Left colon (tissue), 2 donors: ENCODE measurements at regions of chr17 and their contacts with region 1.

Region 1: GRCh38 chr17:62065598-62066468 is 755 bp upstream of the MED13 start:
- DNase-seq: peak; percentile 98 to 99
- ATAC-seq: peak; percentile 96

Region 2: DNA sequence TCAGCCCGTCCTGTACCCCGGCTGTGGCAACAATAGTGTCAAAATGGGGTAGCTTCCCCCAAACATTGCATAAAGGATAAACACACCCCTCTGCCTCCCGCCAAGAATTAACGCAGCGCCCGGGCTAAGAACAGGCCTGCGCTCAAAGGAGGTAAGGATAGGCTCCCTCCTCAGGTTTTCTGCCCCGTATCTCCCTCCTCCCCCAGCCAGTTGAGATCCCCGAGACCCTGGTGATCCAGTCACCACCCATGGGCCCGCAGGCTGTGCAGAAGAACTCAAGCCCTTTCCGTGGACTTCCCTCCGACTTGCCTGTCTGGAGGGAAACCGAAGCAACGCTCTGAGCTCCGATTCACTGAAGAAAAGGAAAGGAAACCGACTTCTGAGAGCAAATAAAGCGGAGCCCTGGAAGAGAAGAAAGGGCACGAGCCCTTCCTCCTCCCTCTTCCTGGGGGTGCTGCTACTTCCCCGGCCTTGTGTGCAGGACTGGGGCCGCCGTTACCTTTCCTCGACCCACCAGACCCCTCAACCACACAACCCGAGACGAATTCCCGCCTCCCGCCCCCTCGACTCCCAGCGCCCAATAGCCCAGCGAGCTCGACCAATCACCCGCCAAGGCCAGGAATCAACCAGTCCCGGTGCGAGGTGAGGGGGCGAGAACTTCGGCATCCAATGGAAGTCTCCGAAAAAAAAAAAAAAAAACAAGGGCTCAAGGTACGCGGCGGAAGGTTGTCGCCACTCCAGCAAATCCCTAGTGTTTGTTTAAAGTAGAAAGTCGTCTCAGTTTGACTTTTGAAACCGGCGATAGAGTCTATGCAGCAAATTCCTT is 202.6 kb before region 1 on chr17 and contains the start of gene BRIP1:
- intact Hi-C with region 1: loop called in 1 of 2 experiments (anchors 10 kb)
- DNase-seq: peak; percentile 91 to 92
- ATAC-seq: peak; percentile 96
- total RNA-seq, gene BRIP1: 1.9 to 3.3 TPM

Region 3: DNA sequence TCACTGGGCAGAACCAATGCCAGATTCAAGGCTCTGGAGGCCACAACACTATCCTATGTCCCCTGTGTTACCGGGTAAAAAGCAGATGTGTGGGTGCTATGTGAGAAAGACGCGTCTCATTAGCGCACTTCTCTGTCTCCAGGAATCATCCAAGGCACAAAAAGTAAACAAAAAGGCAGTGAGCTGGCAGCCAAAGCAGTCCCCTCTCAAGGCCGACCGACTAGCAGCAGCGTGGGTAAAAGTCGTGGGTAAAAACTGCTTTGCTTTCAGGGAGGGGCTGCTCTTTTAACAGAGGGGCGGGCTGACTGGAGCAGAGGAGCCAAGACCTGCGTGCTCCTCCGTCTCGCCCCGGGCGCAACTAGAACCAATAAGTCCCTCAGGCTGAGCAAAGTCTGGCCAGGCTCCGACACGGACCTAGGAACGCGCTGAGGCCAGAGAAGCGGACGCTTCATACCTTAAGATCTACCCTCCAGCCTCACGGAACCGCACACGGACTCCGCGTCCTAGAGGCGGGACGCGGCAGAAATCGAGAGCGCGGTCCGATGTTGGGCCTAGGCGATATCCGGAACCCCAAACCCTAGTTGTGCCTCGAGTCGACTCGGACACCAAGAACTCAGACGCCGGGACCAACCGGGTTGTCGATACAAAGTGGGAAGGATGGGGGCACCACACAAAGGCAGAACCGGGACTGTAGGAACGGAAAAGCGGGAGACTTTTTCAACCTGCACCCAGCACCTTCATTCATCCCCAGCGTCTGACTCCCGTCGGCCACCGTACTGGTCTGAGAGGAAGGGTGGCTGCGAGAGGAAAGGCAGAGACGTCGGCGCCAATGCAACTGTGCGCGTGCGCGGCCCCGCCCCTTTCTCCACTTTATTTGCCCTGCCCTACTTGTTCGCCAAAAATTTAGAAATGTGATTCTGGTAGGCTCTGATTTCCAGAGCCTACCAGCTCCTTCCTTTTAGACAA is 138.3 kb before region 1 on chr17 and contains the start of gene INTS2:
- intact Hi-C with region 1: loop called in 1 of 2 experiments (anchors 5 kb)
- DNase-seq: peak; percentile 95 to 97
- ATAC-seq: peak; percentile 95
- total RNA-seq, gene INTS2: 9.2 to 9.8 TPM

Region 4: DNA sequence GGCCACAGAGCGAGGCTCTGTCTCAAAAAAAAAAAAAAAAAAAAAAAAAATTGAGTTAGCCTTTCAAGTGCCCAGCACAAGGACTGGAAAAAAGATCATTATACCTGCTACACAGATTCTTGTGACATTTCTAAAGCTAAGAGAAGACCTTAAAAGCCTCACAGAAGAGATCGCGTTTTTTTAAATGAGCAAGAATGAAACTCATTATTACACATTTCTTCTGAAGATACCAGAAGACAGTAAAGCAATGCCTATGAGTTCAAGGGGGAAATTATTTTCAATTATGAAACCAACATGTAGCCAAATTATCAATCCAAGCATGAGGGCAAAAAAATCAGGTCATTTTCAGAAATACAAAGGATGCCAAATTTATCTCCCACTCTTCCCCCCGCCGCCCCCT is 57.5 kb before region 1 on chr17:
- intact Hi-C with region 1: no loop called
- DNase-seq: no peak
- ATAC-seq: no peak